AG04449 (cell line): ENCODE measurements at regions of chr2 and their contacts with region 1.

Region 1: DNA sequence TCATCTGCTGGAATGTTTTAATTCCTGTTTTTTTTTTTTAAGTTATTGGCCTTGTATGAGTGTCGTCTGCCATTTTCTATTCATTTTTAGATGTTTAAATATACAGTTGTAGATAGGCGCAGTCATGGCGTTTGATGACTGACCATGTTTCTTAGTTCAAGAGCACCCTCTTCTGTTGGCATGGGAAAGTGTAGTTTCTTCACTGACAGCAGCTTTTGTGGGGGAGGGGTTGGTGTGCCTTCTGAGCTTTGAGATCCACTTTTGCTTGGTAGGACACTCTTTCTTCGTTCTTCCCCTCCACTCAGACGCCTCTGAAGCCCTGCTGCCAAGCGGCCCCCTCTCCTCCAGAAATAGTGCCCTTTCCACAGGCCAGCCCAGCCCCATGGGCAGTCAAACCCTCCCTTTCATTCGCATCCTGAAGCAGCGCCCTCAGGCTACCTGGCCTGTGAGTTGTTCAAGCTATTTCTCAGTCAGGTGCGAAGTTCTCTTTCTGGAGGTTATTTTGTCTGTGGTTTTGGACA is 492.0 kb downstream of the TNS1 start:
- DNase-seq: no peak
- H3K4me3 ChIP-seq: no peak overlapping the region
- CTCF ChIP-seq: peak; percentile 78

Region 2: DNA sequence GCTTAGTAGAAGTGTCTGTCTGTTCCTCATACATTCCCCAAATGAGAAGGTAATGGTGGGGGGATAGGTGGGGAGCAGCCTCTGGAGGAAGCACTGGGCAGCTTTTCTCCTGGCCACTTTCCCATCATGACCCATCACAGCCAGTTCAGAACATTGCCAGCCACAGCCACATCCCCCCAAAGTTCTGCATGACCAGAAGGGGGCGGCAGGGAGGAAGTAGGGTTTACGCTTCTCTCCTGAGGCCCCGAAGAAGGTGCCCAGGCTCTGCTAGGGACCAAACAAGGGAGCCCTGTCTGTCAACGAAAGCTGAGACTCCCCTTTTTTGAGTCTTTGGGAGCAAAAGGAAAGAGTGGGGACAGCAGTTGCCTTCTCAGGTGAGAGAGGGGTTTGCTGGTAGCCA is 823.2 kb before region 1 on chr2:
- CTCF ChIA-PET with region 1: interaction called, 26 read pairs
- POLR2A ChIA-PET with region 1: interaction called, 4 read pairs
- DNase-seq: no peak
- H3K4me3 ChIP-seq: no peak overlapping the region
- CTCF ChIP-seq: peak; percentile 37

Region 3: GRCh38 chr2:216698895-216699294 is 811.9 kb before region 1 on chr2:
- CTCF ChIA-PET with region 1: interaction called, 22 read pairs
- POLR2A ChIA-PET with region 1: no interaction called
- DNase-seq: no peak
- H3K4me3 ChIP-seq: no peak overlapping the region
- CTCF ChIP-seq: peak; percentile 66

Region 4: DNA sequence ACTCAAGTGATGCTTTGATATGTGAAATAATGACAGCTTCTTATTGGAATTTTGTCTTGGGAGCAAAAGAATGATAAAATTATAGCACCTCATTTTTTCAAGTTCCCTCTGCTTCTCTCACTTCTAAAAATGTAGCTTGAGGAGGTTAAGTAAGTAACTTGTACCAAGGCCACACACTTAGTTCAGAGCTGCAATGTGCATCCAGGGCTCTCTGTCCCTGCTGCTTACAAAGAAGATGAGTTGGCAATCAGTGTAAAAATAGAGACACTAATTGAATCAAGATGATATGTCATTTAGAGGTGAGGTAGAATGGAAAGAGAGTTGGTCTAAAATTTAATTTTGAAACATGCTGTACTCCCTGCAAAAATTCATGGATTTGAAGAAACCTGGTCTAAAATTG is 339.0 kb before region 1 on chr2:
- CTCF ChIA-PET with region 1: interaction called, 21 read pairs
- POLR2A ChIA-PET with region 1: no interaction called
- DNase-seq: no peak
- H3K4me3 ChIP-seq: no peak overlapping the region
- CTCF ChIP-seq: no peak